Pancreas (tissue), 10 donors: ENCODE measurements at regions of chr14 and their contacts with region 1.

Region 1: DNA sequence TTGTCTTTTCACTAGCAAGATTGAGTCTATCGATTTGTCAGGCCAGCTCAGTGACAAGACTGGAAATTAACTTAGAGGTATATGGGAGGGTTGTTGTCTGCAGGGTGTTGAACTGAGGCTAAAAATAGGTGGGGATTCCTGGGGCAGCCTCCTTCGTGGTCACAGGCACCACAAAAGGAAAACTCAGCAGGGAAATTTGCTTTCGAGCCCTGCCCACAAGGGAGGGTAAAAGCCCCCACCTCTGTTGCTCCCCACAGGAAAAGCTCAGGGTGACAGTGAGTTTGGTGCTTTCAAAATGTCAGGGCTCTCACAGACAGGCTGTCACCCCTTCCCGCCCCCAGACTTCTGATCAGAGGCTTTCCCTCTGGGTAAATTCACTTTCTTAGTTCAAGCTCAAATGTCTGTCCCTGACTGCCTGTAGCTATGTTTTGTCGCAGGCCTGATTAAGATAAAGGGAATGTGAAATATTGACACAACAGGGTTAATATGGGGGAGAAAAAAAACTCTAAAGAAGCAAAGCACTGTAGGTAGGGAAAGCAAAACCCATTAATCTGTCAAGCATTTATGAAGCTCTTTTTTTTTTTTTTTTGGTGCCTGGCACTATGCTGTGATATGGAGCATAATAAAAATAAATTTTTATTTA is 11.7 kb upstream of the NFKBIA start:
- DNase-seq: no peak
- ATAC-seq: no peak
- H3K4me3 ChIP-seq: no peak overlapping the region
- H3K27ac ChIP-seq: no peak overlapping the region
- H3K4me1 ChIP-seq: no peaks in the 10 kb centered on the region
- H3K27me3 ChIP-seq: no peaks in the 10 kb centered on the region
- CTCF ChIP-seq: no peak

Region 2: DNA sequence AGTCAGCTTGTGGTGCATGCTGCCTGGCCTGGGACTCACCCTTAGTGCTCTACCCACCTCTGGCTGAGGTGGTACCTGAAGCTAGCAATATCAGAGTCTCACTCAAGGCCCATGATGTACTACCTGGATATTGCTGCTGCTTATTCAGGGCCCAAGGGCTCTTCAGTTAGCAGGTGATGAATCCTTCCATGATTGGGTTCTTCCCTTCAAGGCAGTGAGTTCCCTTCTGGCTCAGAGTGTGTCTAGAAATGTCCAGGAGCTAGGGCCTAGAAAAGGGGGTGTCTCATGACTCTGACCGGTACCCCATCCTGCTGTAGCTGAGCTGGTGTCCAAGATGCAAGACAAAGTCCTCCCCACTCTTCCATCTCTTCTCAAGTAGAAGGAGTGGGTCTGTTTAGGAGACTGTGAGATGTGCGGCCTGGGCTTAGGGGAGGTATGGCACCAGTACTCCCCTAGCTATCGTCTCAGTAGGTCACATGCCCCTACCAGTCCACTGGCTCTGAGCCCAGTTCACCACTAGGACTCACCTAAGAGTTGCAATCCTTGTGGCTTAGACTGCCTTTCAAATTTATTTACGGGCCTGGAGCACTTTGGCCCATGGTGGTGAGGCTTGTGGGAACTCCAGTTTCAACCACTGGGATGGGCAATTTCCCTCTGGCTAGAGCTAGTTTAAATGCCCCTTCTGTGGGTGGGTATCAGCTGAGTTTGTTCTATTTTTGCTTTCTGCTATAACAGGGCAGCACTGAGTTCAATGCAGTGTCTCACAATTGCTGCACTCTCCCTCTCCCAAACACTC is 281.7 kb before region 1 on chr14:
- intact Hi-C with region 1: loop called in 2 of 3 experiments (anchors 5 kb)
- DNase-seq: no peak
- ATAC-seq: no peak
- H3K4me3 ChIP-seq: no peak overlapping the region
- H3K27ac ChIP-seq: no peak overlapping the region
- H3K4me1 ChIP-seq: no peaks in the 10 kb centered on the region
- H3K27me3 ChIP-seq: no peaks in the 10 kb centered on the region
- CTCF ChIP-seq: no peak

Region 3: DNA sequence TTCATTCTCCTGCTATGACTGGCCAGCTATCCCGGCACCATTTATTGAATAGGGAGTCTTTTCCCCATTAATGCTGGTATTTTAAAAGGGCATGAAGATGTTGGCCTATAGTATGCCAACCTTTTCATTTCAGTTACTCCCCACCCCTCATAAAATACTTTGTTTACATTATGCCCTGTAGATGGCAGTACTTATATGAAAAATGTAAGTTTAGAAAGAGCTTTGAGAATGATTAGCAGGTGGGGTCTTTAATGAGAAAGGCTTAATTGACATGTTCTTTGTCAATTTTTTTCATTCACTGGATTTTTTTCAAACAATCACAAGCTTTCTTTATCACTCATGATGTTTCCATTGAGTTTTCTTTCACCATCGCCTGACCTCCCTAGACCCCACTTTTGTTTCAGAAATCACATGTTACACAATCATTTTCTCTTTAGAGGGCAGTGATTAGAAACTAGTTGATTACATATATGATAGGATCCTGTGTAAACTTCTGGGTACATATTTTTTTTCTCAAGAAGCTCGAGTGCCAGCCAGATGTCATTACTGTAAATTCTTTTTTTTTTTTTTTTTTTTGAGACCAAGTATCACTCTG is 186.6 kb before region 1 on chr14:
- intact Hi-C with region 1: loop called in 1 of 3 experiments (anchors 10 kb)
- DNase-seq: no peak
- ATAC-seq: peak in 2 of 4 donors; percentile 52 to 53
- H3K4me3 ChIP-seq: no peak overlapping the region
- H3K27ac ChIP-seq: no peak overlapping the region
- H3K4me1 ChIP-seq: no peaks in the 10 kb centered on the region
- H3K27me3 ChIP-seq: no peaks in the 10 kb centered on the region
- CTCF ChIP-seq: no peak